ENCODE measurements at regions of chr6 and their contacts with region 1.

Region 1: DNA sequence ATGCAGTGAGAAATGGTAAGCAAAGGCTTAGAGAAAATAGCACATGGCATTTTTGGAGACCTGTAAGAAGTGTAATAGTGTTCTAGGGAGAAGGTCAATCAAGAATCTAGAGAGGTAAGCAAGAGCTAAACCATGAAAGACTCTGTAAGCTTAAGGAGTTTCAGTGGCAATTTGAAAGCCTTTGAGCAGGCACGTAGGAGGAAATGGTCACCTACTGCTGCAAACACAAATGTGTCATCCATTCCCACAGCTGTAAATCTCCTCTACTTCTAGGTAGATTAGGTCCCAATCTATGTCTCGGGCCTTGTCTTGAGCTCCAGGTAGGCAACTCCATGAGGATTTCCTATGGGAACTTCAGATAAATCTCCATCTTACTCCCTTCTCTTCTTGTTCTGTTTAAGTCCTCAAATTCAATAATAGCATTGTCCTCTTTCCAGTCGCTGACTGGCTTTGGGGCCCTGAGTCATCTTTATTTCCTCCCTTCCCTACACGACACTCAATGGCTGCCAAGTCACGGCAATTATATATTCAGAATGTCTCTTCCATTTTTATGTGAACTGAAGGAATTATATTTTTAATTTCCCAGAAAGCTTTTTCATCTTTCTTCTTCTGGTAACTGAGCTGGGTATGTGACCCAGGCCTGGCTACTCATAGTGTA is 24.2 kb upstream of the PAQR8 start:
- DNase-seq: no peak
- ATAC-seq: no peak
- H3K4me3 ChIP-seq: no peak overlapping the region
- H3K27ac ChIP-seq: no peak overlapping the region
- H3K4me1 ChIP-seq: peaks cover 45% of the 10 kb centered on the region
- H3K27me3 ChIP-seq: no peaks in the 10 kb centered on the region
- CTCF ChIP-seq: no peak
- EP300 ChIP-seq: no peak
- POLR2A ChIP-seq: no peak
- RAD21 ChIP-seq: no peak

Region 2: DNA sequence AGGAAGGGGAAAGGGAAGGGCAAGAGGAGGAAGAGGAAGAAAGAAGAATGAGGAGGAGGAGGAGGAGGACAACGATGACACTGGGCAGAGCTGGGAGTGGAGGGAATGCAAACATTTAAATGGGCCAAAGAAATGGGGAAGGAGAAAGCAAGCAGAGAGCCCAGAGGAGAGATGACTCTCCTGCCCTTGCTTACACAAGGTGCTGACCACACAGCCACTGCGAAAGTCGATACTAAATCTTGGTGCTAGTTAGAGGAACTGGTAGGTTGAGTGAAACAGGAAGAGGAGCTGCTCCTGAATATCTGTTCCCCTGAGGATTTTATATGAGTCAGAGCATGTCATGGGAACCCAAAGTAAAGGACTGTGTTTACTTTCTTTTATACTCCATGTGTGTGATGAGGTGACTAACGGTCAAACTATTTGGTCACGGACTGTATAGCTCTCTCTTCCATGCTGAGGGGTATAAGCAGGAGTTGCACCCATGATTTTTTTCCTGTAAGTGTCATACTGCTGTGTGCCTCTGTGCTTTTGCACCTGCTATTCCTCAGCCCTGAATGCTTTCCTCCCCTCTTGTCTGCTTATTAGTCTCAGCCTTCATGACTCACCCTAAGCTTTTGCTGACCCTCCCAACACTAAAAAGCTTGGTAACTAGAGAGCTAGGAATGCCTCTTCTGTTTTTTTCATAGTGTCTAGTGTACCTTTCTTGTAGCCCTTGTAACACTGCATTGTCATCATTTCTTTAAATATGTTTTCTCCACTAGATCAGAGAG is 14.7 kb after region 1 on chr6:
- CTCF ChIA-PET with region 1: no interaction called
- POLR2A ChIA-PET with region 1: interaction called, 12 read pairs
- in situ Hi-C with region 1: no loop called
- intact Hi-C with region 1: no loop called
- DNase-seq: peak; percentile 98
- ATAC-seq: peak; percentile 97
- H3K4me3 ChIP-seq: peak overlapping the region in 2 of 3 experiments; percentile 12 to 22; a peak in 3 of 6 replicates
- H3K27ac ChIP-seq: peak overlapping the region; percentile 55
- H3K4me1 ChIP-seq: peaks cover 58% of the 10 kb centered on the region
- H3K27me3 ChIP-seq: no peaks in the 10 kb centered on the region
- CTCF ChIP-seq: no peak
- EP300 ChIP-seq: peak; percentile 14 to 71; a peak in 3 of 4 replicates
- POLR2A ChIP-seq: no peak
- RAD21 ChIP-seq: no peak

Measured in HepG2 (cell line).